AG04449 (cell line): ENCODE measurements at regions of chr12 and their contacts with region 1.

Region 1: DNA sequence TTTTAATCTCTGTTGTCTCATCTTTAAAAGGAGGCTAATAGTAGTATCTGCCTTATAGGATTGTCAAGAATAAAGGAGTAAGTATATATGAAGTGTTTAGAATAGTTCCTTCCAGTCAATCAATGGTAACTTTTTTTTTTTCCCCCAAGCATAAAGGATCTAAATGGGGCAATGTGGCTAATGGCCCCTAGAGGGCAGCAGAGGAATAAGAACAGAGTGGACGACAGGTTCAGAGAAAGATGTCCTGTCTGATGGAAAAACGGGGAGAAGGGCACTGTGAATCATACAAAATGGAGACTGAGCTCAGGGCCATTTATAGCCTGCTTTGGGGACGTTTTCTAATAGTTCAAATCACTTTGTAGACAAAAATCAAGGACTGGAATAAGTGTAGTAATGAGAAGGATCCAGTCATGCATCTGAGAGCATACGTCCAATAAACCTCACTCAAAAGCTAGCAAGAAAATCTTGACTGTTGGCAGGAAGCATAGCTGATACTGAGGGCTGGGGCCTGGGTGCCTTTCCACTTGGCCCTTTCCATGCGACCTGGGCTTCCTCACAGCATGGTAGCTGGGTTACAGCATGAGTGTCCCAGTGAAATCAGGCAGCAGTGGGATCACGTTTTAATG is 51.3 kb downstream of the IFNG-AS1 start:
- DNase-seq: peak; percentile 23
- H3K4me3 ChIP-seq: no peak overlapping the region
- CTCF ChIP-seq: peak; percentile 63

Region 2: GRCh38 chr12:67601126-67601525 is 439.4 kb before region 1 on chr12:
- CTCF ChIA-PET with region 1: no interaction called
- POLR2A ChIA-PET with region 1: no interaction called
- DNase-seq: no peak
- H3K4me3 ChIP-seq: no peak overlapping the region
- CTCF ChIP-seq: no peak

Region 3: GRCh38 chr12:67981287-67982162 is 59.0 kb before region 1 on chr12:
- CTCF ChIA-PET with region 1: no interaction called
- POLR2A ChIA-PET with region 1: no interaction called
- DNase-seq: peak; percentile 86
- H3K4me3 ChIP-seq: no peak overlapping the region
- CTCF ChIP-seq: no peak

Region 4: DNA sequence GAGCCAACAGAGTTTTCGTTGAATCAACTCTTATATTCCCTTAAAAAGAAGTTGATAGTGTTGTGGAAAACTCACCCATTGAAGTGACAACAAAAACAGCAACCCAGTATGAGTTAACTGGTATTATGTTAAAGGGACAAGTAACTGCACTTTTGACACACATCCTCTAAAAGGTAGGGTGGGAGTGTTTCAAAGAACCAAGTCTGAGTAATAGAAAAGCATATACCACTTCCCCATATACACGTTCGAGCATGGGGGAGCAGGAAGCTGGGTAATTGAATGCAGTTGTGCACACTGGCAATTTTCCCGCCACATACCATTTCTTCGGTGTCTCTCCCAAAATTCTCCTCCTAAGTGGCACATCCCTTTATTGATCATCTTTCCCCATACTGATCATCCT is 19.9 kb before region 1 on chr12:
- CTCF ChIA-PET with region 1: interaction called, 34 read pairs
- POLR2A ChIA-PET with region 1: no interaction called
- DNase-seq: no peak
- H3K4me3 ChIP-seq: no peak overlapping the region
- CTCF ChIP-seq: no peak

Region 5: GRCh38 chr12:68028647-68029046 is 11.9 kb before region 1 on chr12:
- CTCF ChIA-PET with region 1: interaction called, 30 read pairs
- POLR2A ChIA-PET with region 1: no interaction called
- DNase-seq: no peak
- H3K4me3 ChIP-seq: no peak overlapping the region
- CTCF ChIP-seq: no peak

Region 6: GRCh38 chr12:68158432-68158831 is 117.9 kb after region 1 on chr12:
- CTCF ChIA-PET with region 1: interaction called, 31 read pairs
- POLR2A ChIA-PET with region 1: no interaction called
- DNase-seq: no peak
- H3K4me3 ChIP-seq: no peak overlapping the region
- CTCF ChIP-seq: peak; percentile 24

Region 7: GRCh38 chr12:68468036-68468435 is 427.5 kb after region 1 on chr12:
- CTCF ChIA-PET with region 1: no interaction called
- POLR2A ChIA-PET with region 1: no interaction called
- DNase-seq: no peak
- H3K4me3 ChIP-seq: no peak overlapping the region
- CTCF ChIP-seq: no peak